ENCODE measurements at regions of chr2 and their contacts with region 1.

Region 1: GRCh38 chr2:207334624-207335371 is 169.1 kb upstream of the KLF7 start:
- DNase-seq: peak; percentile 89

Region 2: DNA sequence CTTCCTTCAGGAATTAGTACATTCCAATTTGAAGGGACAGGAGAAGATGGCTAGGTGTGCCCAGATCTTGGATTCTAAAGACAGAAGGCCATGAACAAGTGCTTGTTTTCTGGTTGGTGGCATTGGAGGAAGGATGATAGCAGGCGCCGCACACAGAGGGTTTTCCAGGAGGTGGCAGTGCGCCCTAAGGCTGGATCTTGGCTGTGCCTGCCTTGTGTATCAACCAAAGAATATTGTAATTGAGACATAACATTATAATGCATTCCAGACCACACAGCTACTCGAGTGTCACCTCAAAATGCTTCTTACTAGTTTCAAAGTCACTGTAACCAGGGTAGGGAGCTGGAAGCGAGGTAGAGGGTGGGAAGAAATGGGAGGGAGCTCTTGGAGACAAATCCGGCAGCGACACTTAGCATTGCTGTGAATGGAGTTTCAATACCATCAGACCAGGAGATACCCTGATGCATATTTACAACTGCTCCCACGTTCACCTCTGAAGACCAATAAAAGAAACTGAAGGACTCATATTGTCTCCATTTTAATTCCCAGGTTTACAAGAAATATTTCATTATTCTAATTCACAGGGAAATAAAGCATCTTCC is 353.0 kb before region 1 on chr2:
- intact Hi-C with region 1: loop called (anchors 5 kb)
- DNase-seq: peak; percentile 85

Region 3: DNA sequence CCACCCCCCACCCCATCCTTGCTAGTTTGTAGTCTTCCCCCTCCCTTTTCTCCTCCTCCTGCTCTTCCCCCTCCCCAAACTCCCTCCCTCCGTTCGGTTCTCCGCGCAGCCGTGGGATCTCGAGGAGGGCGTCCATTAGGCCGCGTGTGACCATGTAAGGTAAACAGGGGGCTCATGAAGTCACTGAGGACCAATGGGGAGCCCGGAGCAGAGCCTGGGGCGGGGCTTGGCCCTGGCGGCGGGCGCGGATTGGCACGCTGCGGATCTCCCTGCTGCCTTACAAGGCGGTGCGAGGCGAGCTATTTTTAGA is 168.8 kb before region 1 on chr2:
- intact Hi-C with region 1: loop called (anchors 1 kb)
- DNase-seq: peak; percentile 100

Region 4: DNA sequence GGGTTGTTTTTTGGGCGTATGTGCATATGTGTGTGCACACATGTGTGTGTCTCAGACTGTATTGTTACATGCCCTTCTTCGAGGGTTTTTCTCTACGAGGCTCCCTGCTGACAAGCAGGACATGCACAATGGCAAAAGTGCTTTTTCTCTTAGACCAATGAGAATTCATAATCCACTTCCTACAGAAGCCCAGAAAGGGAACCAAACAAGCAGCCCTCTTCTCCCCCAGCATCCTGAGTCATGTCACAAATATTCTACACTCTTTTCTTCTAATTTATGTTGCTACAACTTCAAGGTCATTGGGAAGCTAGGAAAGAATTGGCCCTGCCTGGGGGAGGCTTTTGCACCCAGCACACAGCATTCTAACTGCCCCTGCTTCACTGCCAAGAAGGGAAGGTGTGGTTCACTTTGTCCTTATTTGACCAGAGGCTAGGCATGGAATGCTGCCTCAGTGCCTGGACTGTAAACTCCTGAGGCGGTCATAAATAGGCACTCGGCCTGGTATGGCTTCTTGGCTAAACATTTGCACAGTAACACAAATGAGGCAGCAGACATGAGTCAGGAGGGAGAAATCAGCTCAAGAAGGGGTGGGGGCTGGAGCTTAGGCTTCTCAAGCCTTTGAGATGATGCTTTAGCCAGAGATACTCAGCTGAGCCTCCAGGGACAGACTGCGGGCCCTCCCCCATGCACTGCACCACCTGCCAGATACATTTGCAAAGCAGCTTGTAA is 76.4 kb before region 1 on chr2:
- intact Hi-C with region 1: loop called (anchors 2 kb)
- DNase-seq: no peak

Region 5: DNA sequence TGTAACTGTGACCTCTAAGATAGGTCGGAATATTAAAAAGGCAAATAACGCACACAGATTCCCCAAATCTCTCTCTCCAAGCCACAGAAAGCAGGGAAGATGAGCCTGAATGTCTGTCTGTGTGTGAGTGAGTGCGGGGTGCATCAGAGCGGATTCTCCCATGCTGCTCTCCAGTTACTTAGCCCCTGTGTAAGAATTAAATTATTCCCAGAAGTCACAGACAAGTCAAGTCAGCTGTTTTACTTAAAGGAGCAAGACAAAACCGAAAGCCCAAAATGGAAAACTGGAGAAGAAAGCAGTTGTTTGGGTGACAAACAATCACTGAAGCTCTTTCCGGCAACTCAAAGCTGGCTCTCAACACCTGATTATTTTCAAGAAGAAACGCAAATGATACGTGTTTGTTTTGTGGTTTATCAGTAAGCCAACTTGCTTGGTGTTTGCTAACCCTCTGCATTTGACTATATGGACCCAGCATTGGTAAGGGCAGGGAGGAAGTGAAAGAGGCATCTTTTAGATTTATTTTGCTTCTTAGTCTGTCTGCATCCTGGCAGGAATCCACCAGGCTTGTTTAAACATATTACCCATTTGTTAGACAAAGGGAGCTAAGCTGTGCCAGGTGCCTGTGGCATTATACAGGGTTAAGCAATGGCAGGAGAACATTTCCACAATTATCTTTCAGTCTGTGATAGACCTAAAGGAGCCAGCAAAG is 73.4 kb after region 1 on chr2:
- intact Hi-C with region 1: loop called (anchors 5 kb)
- DNase-seq: no peak